OCI-LY7 (cell line): ENCODE measurements at regions of chr5 and their contacts with region 1.

Region 1: GRCh38 chr5:138382347-138382746 is 29.9 kb downstream of the KDM3B start:
- DNase-seq: no peak
- H3K4me3 ChIP-seq: no peak overlapping the region
- H3K27ac ChIP-seq: no peak overlapping the region
- H3K4me1 ChIP-seq: no peaks in the 10 kb centered on the region
- CTCF ChIP-seq: no peak

Region 2: GRCh38 chr5:137743031-137743640 is 639.2 kb before region 1 on chr5:
- CTCF ChIA-PET with region 1: no interaction called
- POLR2A ChIA-PET with region 1: no interaction called
- intact Hi-C with region 1: no loop called
- DNase-seq: peak; percentile 73
- H3K4me3 ChIP-seq: no peak overlapping the region
- H3K27ac ChIP-seq: no peak overlapping the region
- H3K4me1 ChIP-seq: no peaks in the 10 kb centered on the region
- CTCF ChIP-seq: peak; percentile 80

Region 3: DNA sequence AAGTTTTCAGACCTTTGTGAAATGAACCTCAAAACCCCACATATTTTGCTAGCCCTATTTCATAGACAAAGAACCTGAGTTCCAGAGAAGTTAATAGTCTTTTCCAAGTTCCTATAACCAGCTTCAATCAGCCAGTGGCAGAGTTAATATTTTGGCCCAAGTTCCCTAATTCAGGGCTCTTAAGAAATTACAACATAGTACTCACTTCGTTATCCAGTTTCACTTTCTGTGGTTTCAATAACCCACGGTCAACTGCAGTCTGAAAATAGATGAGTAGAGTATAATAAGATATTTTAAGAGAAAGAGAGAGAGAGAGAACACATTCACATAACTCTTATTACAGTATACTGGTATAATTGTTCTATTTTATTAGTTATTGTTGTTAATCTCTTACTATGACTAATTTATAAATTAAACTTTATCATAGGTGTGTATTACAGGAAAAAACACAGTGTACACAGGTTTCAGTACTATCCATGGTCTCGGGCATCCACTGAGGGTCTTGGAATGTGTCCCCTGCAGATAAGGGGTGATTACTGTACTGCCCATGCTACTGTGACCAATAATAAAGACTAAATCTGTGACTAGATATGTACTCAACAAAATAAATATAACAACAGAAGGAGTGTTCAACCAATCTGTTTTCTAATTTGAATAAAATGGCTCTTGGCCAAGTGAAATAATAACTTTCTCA is 524.0 kb before region 1 on chr5:
- CTCF ChIA-PET with region 1: no interaction called
- POLR2A ChIA-PET with region 1: no interaction called
- intact Hi-C with region 1: no loop called
- DNase-seq: no peak
- H3K4me3 ChIP-seq: no peak overlapping the region
- H3K27ac ChIP-seq: no peak overlapping the region
- H3K4me1 ChIP-seq: no peaks in the 10 kb centered on the region
- CTCF ChIP-seq: no peak

Region 4: GRCh38 chr5:138408023-138408422 is 25.7 kb after region 1 on chr5:
- CTCF ChIA-PET with region 1: no interaction called
- POLR2A ChIA-PET with region 1: interaction called, 12 read pairs
- intact Hi-C with region 1: no loop called
- DNase-seq: peak; percentile 4
- H3K4me3 ChIP-seq: no peak overlapping the region
- H3K27ac ChIP-seq: no peak overlapping the region
- H3K4me1 ChIP-seq: no peaks in the 10 kb centered on the region
- CTCF ChIP-seq: no peak